Activated CD4-positive, alpha-beta T cell treated with anti-CD3 and anti-CD28 coated beads, Interleukin-2, amount 10 ng/mL, durations not matched to agents 7 days and 5 days (primary cell): ENCODE measurements at regions of chr2 and their contacts with region 1.

Region 1: DNA sequence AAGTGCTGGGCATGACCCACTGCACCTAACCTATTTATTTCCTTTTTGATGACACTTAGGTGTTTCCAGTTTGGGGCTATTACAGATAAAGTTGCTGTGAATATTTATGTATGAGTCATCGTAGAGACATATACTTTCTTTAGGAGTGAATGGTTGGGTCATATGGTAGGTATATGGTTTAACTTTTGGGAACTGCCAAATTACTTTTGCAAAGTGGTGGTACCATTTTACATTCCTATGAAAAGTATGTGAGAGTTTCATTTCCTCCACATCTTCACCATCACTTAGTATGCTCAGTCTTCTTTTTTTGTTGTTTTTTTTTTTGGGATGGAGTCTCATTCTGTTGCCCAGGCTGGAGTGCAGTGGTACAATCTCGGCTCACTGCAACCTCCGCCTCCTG is 56.1 kb downstream of the HNRNPLL start:
- DNase-seq: no peak
- H3K4me3 Mint-ChIP-seq: no peak overlapping the region
- H3K27ac Mint-ChIP-seq: no peak overlapping the region
- H3K4me1 Mint-ChIP-seq: peaks cover 22% of the 10 kb centered on the region
- H3K27me3 Mint-ChIP-seq: peaks cover 2% of the 10 kb centered on the region

Region 2: GRCh38 chr2:38535744-38536506 is 10.7 kb before region 1 on chr2:
- CTCF ChIA-PET with region 1: interaction called, 12 read pairs
- POLR2A ChIA-PET with region 1: no interaction called
- DNase-seq: peak; percentile 80
- H3K4me3 Mint-ChIP-seq: peak overlapping the region; percentile 30
- H3K27ac Mint-ChIP-seq: no peak overlapping the region
- H3K4me1 Mint-ChIP-seq: peaks cover 6% of the 10 kb centered on the region
- H3K27me3 Mint-ChIP-seq: peaks cover 26% of the 10 kb centered on the region

Region 3: GRCh38 chr2:38734299-38735058 is 187.9 kb after region 1 on chr2:
- CTCF ChIA-PET with region 1: no interaction called
- POLR2A ChIA-PET with region 1: no interaction called
- DNase-seq: no peak
- H3K4me3 Mint-ChIP-seq: no peak overlapping the region
- H3K27ac Mint-ChIP-seq: no peak overlapping the region
- H3K4me1 Mint-ChIP-seq: peaks cover 3% of the 10 kb centered on the region
- H3K27me3 Mint-ChIP-seq: no peaks in the 10 kb centered on the region

Region 4: GRCh38 chr2:38947240-38948239 is 401.0 kb after region 1 on chr2:
- CTCF ChIA-PET with region 1: no interaction called
- POLR2A ChIA-PET with region 1: no interaction called
- DNase-seq: peak; percentile 83
- H3K4me3 Mint-ChIP-seq: no peak overlapping the region
- H3K27ac Mint-ChIP-seq: no peak overlapping the region
- H3K4me1 Mint-ChIP-seq: no peaks in the 10 kb centered on the region
- H3K27me3 Mint-ChIP-seq: no peaks in the 10 kb centered on the region

Region 5: DNA sequence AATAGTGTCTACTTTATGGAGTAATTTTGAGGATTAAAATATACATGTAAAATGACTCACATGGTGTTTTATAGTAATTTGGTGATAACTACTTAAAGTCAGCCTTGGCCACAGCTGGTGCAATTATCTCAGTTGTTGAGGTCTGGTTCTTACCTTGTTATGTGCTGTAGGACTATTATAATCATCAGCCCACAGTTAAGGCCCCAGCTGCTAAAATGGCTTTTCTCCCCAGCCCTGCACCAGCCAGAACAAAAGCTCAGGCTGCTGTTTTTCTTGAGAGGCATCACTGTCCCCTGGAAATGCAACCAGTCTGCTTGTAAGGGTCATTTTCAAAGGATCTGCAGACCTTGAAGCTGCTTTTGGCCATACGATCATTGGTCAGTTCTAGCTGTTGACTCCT is 1515.8 kb after region 1 on chr2:
- CTCF ChIA-PET with region 1: no interaction called
- POLR2A ChIA-PET with region 1: interaction called, 12 read pairs
- DNase-seq: no peak
- H3K4me3 Mint-ChIP-seq: no peak overlapping the region
- H3K27ac Mint-ChIP-seq: no peak overlapping the region
- H3K4me1 Mint-ChIP-seq: no peaks in the 10 kb centered on the region
- H3K27me3 Mint-ChIP-seq: no peaks in the 10 kb centered on the region